Mucosa of descending colon (tissue), 3 donors: ENCODE measurements at regions of chr14 and their contacts with region 1.

Region 1: DNA sequence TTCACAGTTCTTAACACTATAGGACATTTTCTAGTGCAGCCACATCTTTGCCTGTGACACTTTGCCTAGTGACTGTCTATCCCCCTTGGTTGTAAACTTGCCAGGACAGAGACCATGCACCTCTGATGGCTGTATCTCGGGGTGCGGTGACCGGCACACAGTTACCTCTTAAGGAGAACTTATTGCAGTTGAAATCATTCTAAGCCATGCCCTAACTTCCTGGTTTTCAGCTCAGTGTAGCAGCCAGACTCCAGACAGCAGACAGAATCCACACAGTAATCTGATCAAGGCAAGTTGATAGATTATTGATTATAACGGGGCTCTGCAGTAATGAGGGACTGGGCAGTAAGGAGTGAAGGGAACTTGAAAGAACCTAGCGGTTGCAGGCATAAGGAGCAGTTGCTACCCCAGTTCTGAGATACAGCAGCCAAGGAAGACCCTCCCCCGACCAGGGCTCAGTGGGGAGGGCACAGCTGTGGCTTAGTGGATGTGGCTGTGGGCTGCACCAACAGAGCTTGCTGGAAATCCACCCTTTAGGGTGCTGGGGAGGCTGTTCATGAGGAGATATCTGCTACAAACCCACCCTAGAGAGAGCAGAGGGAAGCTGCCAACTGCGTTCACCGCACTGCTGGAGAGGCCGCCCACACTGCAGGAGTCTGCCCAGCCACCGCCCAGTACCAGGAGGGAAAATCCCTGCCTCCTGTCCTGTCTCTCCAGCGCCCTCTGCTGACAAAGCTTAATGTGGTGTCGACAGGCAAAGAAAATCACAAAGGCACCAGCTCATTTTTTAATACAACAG is 58.2 kb upstream of the BEGAIN start:
- DNase-seq: peak; percentile 86 to 99 (median 88)
- ATAC-seq: peak; percentile 90
- H3K4me3 ChIP-seq: no peak overlapping the region
- H3K4me1 ChIP-seq: peaks cover 24% of the 10 kb centered on the region
- CTCF ChIP-seq: peak; percentile 75

Region 2: GRCh38 chr14:100383727-100384158 is 261.6 kb before region 1 on chr14:
- intact Hi-C with region 1: loop called (anchors 5 kb)
- DNase-seq: peak; percentile 63 to 77 (median 74)
- ATAC-seq: peak; percentile 84
- H3K4me3 ChIP-seq: no peak overlapping the region
- H3K4me1 ChIP-seq: peaks cover 12% of the 10 kb centered on the region
- CTCF ChIP-seq: peak; percentile 65

Region 3: DNA sequence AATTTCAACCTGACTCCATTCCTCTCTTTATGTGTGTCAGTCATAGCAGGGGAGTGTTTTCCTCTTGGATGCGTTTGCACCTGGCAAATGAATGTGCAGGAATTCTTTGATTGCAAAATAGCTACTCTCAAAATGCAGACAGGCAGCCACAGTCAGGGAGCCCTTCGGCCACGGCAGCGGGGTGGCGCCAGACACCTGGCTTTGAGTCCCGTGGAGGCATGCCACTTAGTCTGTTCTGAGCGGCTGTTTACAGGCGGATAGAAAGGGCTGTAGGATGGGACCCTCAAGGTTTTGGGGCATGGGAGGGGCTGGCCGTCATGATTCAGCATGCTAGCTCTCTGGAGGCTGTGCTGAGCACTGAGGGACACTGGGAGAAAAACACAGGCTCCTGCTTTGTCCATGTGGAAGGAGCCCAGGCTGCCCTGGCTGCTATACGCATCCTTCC is 205.2 kb before region 1 on chr14:
- intact Hi-C with region 1: loop called in 1 of 2 experiments (anchors 5 kb)
- DNase-seq: peak; percentile 80 to 87 (median 87)
- ATAC-seq: peak; percentile 76
- H3K4me3 ChIP-seq: no peak overlapping the region
- H3K4me1 ChIP-seq: peaks cover 53% of the 10 kb centered on the region
- CTCF ChIP-seq: peak; percentile 72

Region 4: GRCh38 chr14:100547633-100548294 is 97.6 kb before region 1 on chr14:
- intact Hi-C with region 1: loop called in 1 of 2 experiments (anchors 10 kb)
- DNase-seq: peak; percentile 72 to 91 (median 86)
- ATAC-seq: peak; percentile 68
- H3K4me3 ChIP-seq: no peak overlapping the region
- H3K4me1 ChIP-seq: peaks cover 35% of the 10 kb centered on the region
- CTCF ChIP-seq: no peak